Activated CD4-positive, alpha-beta T cell treated with anti-CD3 and anti-CD28 coated beads for 36 hours (primary cell): ENCODE measurements at regions of chr18 and their contacts with region 1.

Region 1: DNA sequence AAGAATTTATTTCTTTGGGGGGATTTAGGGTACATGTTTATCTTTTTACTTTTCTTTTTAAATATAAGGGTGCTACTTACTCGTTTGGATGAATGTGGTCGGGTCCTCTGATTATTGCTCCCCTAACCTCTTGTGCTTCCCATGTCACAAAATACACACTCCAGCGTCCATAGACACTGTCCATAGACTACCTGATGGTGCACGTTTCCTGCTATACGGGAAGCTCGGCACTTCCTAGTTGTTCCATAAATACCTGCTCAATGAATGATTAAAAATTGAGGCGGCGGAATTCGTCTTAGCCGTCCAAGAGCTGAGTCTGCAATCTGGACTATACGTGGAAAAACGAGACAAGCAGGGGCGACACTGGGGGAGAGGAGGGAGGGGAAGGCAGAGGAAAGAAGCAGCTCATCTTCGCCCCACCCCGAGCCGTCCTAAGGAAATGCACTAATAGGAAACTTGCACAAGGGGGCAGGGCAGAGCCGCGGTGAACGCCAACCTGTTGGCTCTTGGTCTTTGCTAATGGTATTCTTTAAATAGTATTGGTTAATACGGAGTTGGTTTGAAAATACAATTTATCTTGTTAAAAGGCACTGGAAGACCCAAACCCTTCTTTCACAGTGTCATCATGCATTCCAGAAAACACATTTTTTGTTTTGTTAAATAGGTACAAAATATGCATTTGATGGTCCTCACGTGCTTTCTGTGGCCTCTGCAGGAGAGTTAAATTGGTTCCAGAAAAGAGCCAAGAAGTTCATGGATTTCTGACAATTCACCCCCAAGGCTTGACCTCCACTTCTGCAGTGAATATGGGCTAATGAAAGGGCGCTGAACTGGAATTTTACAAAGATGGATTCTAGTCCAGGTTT is 73.0 kb upstream of the KCTD1 start:
- DNase-seq: peak; percentile 63
- ATAC-seq: peak; percentile 68
- H3K4me3 Mint-ChIP-seq: no peak overlapping the region
- H3K27ac Mint-ChIP-seq: no peak overlapping the region
- H3K4me1 Mint-ChIP-seq: no peaks in the 10 kb centered on the region
- H3K27me3 Mint-ChIP-seq: peaks cover 9% of the 10 kb centered on the region

Region 2: GRCh38 chr18:26568926-26569665 is 52.3 kb before region 1 on chr18:
- CTCF ChIA-PET with region 1: no interaction called
- POLR2A ChIA-PET with region 1: no interaction called
- intact Hi-C with region 1: loop called in 1 of 2 experiments (anchors 10 kb)
- DNase-seq: no peak
- ATAC-seq: no peak
- H3K4me3 Mint-ChIP-seq: no peak overlapping the region
- H3K27ac Mint-ChIP-seq: no peak overlapping the region
- H3K4me1 Mint-ChIP-seq: no peaks in the 10 kb centered on the region
- H3K27me3 Mint-ChIP-seq: peaks cover 9% of the 10 kb centered on the region

Region 3: GRCh38 chr18:26703170-26703930 is 82.0 kb after region 1 on chr18:
- CTCF ChIA-PET with region 1: no interaction called
- POLR2A ChIA-PET with region 1: no interaction called
- intact Hi-C with region 1: no loop called
- DNase-seq: no peak
- ATAC-seq: no peak
- H3K4me3 Mint-ChIP-seq: no peak overlapping the region
- H3K27ac Mint-ChIP-seq: no peak overlapping the region
- H3K4me1 Mint-ChIP-seq: no peaks in the 10 kb centered on the region
- H3K27me3 Mint-ChIP-seq: peaks cover 1% of the 10 kb centered on the region

Region 4: DNA sequence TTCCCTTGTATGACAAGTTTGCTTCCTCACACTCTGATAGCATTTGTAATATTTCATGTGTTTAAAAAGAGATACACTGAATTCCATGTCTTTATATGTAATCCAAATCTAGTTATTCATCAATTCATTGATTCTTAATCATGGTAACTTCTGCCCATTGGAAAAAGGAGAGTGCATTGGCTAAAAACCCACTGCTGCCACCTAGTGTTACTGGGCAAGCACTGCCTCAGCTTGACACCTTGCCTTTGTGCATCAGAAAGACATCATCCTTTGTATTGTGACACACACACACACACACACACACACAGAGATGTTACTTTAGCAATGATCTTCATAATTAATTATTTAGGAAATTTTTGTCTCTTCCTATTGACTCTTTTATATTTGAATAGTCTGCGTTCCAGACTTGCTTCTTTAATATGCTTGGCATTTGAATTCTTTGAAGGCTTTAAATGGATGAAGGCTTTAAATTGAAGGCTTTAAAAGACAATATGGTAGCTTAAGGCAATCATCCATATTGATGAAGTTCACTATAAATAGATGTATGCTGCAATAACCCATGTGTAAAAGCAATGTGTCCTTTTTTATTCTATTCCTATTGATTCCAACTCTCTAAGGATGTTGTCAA is 977.9 kb after region 1 on chr18:
- CTCF ChIA-PET with region 1: no interaction called
- POLR2A ChIA-PET with region 1: no interaction called
- intact Hi-C with region 1: loop called in 1 of 2 experiments (anchors 5 kb)
- DNase-seq: peak; percentile 57
- ATAC-seq: no peak
- H3K4me3 Mint-ChIP-seq: no peak overlapping the region
- H3K27ac Mint-ChIP-seq: no peak overlapping the region
- H3K4me1 Mint-ChIP-seq: no peaks in the 10 kb centered on the region
- H3K27me3 Mint-ChIP-seq: no peaks in the 10 kb centered on the region